ENCODE measurements at regions of chr5 and their contacts with region 1.

Region 1: DNA sequence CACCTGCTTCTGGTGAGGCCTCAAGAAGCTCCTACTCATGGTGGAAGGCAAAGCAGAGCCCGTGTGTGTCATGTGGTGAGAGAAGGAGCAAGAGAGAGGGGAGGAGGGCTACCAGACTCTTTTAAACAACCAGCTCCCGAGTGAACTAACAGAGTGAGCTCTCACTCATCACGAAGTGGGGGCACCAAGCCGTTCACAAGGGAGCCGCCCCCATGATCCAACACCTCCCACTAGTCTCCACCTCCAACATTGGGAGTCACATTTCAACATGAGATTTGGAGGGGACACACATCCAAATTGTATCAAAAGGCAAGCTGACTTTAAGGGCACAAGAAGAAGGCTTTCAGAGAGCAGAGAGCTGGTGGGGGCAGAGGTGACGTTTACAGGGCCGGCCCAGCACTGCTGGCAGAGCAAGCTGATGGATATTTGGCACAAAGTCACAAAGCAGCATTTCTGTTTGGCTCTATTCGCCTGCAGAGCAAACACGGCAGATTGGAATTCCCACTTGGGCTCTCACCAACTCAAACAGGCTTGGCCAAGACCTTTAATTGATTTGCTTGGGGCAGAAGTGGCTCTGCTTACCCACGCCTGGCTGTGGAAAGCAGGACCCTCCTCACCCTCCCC is 20.0 kb downstream of the PITX1 start:
- DNase-seq: peak; percentile 23
- ATAC-seq: peak; percentile 39; the same call in 2 of the 3 replicates
- H3K4me3 ChIP-seq: no peak overlapping the region
- H3K27ac ChIP-seq: no peak overlapping the region
- H3K4me1 ChIP-seq: peaks cover 14% of the 10 kb centered on the region
- H3K27me3 ChIP-seq: no peaks in the 10 kb centered on the region
- CTCF ChIP-seq: no peak
- EP300 ChIP-seq: no peak
- POLR2A ChIP-seq: no peak
- RAD21 ChIP-seq: no peak

Region 2: GRCh38 chr5:135191084-135191826 is 177.2 kb after region 1 on chr5:
- CTCF ChIA-PET with region 1: interaction called, 18 read pairs
- POLR2A ChIA-PET with region 1: no interaction called
- in situ Hi-C with region 1: no loop called
- intact Hi-C with region 1: loop called (anchors 5 kb)
- DNase-seq: peak; percentile 68
- ATAC-seq: peak; percentile 98
- H3K4me3 ChIP-seq: peak overlapping the region; percentile 72 to 82 (median 76)
- H3K27ac ChIP-seq: no peak overlapping the region
- H3K4me1 ChIP-seq: peaks cover 5% of the 10 kb centered on the region; the same call in 1 of the 2 replicates
- H3K27me3 ChIP-seq: no peaks in the 10 kb centered on the region; a peak in 1 of 5 replicates
- CTCF ChIP-seq: peak; percentile 100
- EP300 ChIP-seq: no peak
- POLR2A ChIP-seq: peak in 1 of 2 experiments; percentile 44; a peak in 1 of 4 replicates
- RAD21 ChIP-seq: peak; percentile 99